ENCODE measurements at regions of chr16 and their contacts with region 1.

Region 1: GRCh38 chr16:28317040-28317880 is 24.9 kb downstream of the SBK1 start:
- DNase-seq: peak; percentile 68 to 81
- ATAC-seq: peak; percentile 78 to 89 (median 83)
- H3K4me3 ChIP-seq: no peak overlapping the region
- H3K27ac ChIP-seq: peak overlapping the region; percentile 3
- H3K4me1 ChIP-seq: no peaks in the 10 kb centered on the region
- H3K27me3 ChIP-seq: no peaks in the 10 kb centered on the region
- CTCF ChIP-seq: peak; percentile 83

Region 2: DNA sequence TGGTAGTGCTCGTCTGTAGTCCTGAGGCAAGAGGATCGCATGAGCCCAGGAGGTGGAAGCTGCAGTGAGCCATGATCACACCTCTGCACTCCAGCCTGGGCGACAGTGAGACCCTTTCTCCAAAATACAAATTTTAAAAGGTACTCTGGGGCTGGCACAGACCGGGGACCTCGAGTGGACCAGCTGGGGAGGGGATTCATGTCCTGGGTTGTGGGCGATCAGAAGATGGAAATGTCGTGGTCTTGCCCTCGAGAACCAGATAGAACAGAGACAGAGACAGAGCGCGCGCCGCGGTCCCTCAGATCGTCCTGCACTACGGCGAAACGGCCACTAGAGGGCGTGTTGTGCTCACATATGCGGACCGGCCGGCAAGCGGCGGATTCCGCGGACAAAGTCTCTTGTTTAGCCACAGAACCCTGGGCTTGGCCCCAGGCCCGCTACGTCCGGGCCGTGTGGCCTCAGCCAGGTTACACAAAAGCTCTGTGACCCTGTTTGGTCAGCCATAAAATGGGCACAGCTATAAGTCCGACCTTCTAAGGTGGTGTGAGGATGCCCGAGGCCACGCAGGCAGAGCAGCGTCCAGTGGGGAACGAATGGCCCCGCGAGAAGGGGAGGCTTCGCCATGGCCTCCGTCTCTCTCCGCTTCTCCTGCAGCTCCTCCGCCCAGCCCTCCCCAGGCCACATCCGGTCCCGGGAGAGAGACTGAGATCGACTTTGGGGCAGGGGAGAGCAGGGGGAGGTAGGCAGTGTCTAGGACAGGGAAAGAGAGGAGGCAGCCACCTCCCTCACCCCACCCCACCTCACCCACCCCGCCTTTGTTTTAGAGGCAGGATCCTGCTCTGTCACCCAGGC is 39.5 kb before region 1 on chr16:
- intact Hi-C with region 1: loop called (anchors 1 to 2 kb)
- DNase-seq: peak; percentile 84 to 92
- ATAC-seq: peak; percentile 91 to 96 (median 93)
- H3K4me3 ChIP-seq: peak overlapping the region; percentile 64
- H3K27ac ChIP-seq: peak overlapping the region; percentile 63
- H3K4me1 ChIP-seq: peaks cover 7% of the 10 kb centered on the region
- H3K27me3 ChIP-seq: no peaks in the 10 kb centered on the region
- CTCF ChIP-seq: peak; percentile 99